ENCODE measurements at regions of chr12 and their contacts with region 1.

Region 1: GRCh38 chr12:131454418-131455217 is 256.3 kb upstream of the SFSWAP start:
- DNase-seq: peak in 2 of 3 donors; percentile 37 to 72
- ATAC-seq: peak; percentile 55 to 65
- H3K4me3 ChIP-seq: no peak overlapping the region
- H3K27ac ChIP-seq: no peak overlapping the region
- H3K4me1 ChIP-seq: no peaks in the 10 kb centered on the region
- H3K27me3 ChIP-seq: no peaks in the 10 kb centered on the region

Region 2: DNA sequence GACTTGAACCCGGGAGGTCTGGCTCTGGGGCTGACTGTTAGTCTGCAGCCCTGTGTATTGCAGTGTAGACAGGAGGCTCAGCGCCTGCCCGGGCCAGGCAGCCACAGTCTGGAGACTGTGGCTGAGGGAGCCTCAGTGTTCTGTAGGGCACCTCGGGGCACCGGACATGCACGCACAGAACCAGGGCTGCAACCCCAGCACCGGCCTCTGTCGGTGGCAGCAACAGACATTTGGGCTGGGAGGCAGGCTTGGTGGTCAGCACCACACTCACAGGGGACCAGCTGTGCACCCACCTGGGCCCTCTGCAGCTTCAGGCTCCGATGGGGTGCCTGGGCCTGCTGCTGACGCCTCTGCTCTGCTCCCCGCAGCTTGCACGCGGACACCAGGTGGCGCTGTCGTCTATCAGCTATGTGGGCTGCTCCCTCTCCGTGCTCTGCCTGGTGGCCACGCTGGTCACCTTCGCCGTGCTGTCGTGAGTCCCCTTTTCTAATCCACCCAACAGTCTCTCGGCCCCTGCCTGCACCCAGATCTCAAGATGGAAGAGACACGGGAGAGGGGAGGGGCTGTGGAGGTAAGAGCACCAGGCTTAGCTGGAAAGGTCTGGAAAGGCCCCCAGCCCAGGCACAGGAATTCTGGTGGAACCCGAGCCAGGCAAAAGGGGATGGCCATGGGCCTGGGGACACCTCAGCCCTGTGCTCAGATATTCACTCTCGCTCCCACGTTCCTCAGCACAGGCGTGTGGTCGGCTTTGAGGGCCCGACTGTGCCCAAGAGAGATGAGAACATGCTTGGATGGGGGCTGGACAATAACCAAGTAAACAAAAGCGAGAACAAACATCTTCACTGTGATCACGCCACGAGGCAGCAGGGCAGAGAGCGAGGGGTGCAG is 349.9 kb before region 1 on chr12:
- intact Hi-C with region 1: loop called in 1 of 4 experiments (anchors 10 kb)
- DNase-seq: peak; percentile 85 to 95 (median 95)
- ATAC-seq: peak; percentile 83 to 88
- H3K4me3 ChIP-seq: no peak overlapping the region
- H3K27ac ChIP-seq: no peak overlapping the region
- H3K4me1 ChIP-seq: no peaks in the 10 kb centered on the region
- H3K27me3 ChIP-seq: no peaks in the 10 kb centered on the region